Right lobe of liver (tissue), 6 donors: ENCODE measurements at regions of chr11 and their contacts with region 1.

Region 1: GRCh38 chr11:93063100-93063499 is 93.6 kb downstream of the MTNR1B start:
- DNase-seq: no peak
- ATAC-seq: no peak
- H3K4me3 ChIP-seq: no peak overlapping the region
- H3K27ac ChIP-seq: no peak overlapping the region
- H3K4me1 ChIP-seq: no peaks in the 10 kb centered on the region
- H3K27me3 ChIP-seq: no peaks in the 10 kb centered on the region
- CTCF ChIP-seq: no peak
- POLR2A ChIP-seq: no peak

Region 2: DNA sequence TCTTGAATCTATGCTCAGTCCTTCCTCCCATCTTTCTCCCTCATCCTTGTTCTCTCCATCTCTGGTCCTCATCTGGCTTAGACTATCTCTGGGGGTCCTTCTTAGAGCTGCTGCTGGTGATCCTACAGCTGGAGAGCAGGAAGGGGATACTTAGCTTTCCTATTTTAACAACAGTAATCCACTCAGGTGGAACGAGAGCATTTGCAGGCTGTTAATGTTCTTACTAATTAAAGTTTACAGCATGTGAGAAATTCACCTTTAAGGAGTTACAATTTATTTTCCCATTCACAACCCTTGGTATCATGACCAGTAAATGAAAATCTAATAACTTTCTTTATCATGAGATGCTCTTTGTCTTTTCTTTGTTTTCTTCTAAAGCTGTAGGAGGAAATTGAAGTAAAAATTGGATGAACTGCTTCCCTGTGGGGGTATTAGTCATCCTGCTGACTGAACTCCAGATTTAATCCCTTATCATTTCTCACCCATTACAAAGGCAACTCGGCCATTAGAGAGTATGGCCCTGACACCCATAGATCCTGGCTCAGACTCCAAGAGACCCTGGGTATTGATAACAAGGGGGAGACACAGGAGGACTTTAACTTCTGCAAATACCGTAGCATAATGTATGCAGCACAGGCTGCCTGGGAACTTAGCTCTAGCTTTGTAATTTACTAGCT is 131.2 kb before region 1 on chr11:
- intact Hi-C with region 1: loop called in 1 of 2 experiments (anchors 10 kb)
- DNase-seq: no peak
- ATAC-seq: no peak
- H3K4me3 ChIP-seq: no peak overlapping the region
- H3K27ac ChIP-seq: no peak overlapping the region
- H3K4me1 ChIP-seq: no peaks in the 10 kb centered on the region
- H3K27me3 ChIP-seq: no peaks in the 10 kb centered on the region
- CTCF ChIP-seq: no peak
- POLR2A ChIP-seq: no peak